ENCODE measurements at regions of chr1 and their contacts with region 1.

Region 1: DNA sequence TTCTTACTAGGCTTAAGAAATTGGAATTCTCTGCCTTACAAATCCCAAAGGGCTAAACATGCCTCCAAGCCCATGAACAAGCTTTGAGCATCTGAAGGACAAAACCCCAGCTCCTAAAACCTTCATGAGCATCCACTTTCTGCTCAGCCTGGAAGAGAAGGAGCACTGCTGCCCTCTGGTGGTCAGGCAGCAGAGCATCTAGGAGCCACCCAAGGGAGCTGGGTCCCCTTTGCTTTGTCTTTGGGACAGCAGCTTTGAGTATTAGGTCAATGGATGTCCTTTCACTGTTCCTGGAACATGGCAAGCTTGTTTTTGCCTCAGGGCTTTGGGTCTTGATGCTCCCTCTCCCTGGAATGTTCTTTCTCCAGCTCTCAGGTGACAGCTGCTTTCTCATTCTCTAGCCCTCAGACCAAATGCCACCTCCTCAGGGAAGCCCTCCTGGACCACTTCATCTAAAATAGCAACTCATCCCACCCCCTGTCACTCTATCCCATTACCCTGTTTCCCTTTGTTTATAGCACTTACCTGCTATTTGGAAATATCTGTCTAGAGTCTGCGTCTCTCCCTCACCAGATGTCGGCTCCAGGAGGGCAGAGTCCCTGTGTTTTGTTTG is 25.7 kb downstream of the RAB7B start:
- DNase-seq: peak; percentile 68
- H3K4me3 ChIP-seq: no peak overlapping the region
- H3K27ac ChIP-seq: no peak overlapping the region
- H3K4me1 ChIP-seq: peaks cover 5% of the 10 kb centered on the region
- H3K27me3 ChIP-seq: no peaks in the 10 kb centered on the region
- CTCF ChIP-seq: peak; percentile 91 to 98
- POLR2A ChIP-seq: no peak

Region 2: DNA sequence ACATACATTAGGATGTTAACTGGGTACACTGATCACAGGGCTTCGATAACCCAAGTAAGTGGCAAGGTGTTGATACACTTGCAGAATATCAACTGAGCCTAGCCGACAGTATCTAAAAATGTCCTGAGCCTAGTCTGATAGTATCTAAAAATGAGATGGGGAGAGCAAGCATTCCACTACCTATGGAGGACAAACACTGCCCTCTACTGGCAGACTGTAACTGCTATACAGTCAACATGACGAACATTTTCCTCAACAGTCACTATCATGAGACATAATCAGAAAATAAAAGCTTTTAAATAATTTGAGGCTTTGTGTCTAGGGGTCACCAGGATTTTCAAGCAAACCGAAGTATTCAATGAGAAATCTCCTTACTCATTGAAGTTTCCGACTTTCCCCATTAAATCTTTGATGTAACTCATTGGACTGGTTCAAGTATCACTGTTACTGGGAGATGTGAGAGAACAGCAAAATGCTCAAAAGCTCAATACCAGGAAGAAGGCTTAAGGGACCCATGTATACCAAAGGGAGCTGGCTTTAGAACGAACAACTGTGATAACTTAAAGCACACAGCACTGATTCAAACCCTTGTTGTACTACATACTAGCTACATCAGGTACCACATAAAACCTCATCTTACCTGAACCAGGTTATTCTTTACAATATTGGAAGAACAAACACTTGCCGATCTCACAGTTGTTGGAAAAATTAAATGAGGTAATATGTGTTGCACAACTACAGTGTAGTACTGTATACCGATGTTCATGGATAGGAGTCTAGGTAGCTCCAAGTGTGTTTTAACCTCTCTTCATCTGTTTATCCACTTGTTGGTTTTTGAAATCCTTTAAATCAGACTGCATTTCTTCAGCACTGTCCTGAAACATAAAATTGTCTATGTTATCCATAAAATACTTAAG is 266.1 kb before region 1 on chr1:
- CTCF ChIA-PET with region 1: interaction called, 31 read pairs
- POLR2A ChIA-PET with region 1: no interaction called
- dilution Hi-C with region 1: no loop called
- intact Hi-C with region 1: no loop called
- DNase-seq: peak; percentile 88
- H3K4me3 ChIP-seq: no peak overlapping the region
- H3K27ac ChIP-seq: peak overlapping the region; percentile 44
- H3K4me1 ChIP-seq: peaks cover 12% of the 10 kb centered on the region
- H3K27me3 ChIP-seq: no peaks in the 10 kb centered on the region
- CTCF ChIP-seq: peak; percentile 67 to 70
- POLR2A ChIP-seq: no peak

Region 3: DNA sequence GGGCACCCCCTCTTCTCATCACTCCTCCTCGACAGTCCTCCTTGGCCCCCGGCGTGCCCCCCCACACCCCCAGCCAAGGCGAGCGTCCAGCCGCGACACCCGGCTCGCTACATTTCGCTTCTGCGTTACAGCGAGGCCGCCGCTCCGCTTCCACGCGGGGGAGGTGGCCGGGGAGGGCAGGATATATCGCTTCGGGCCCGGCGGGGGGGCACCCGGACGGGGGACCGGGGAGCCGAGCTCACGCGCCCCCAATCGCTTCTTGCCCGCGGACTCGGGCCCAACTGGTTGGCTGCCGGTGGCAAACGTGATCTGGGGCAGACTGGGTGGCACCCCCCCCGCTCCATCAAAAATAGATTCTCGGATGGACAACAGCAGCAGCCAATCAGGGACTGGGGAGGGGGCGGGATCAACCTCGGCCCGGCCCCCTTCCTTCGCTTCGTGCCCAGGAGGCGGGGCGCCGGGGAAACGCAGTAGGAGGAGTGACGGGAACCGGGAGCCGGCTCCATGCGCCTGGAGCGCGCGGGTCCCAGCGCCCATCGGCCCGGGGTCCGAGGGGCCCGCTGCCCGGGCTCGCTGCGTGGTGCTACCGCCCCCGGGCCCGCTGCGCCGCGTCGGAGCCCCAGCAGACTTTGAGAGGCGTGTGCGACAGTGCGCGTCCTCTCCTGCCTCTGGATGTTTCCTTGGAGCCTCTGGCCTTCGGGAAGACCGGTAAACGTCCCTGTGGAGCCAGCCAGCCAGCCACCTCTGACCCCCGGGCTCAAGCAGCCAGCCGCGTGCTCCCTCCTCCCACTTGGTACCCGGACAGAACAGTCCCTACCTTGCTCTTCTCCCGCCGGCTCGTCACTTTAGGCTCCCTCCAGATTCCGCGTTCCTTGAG is 164.4 kb before region 1 on chr1 and contains the start of gene SLC41A1:
- CTCF ChIA-PET with region 1: interaction called, 33 read pairs
- POLR2A ChIA-PET with region 1: no interaction called
- dilution Hi-C with region 1: no loop called
- intact Hi-C with region 1: no loop called
- DNase-seq: peak; percentile 96
- H3K4me3 ChIP-seq: peak within 1 kb of the TSS; percentile 49 to 78 (median 76)
- H3K27ac ChIP-seq: peak within 1 kb of the TSS; percentile 45
- H3K4me1 ChIP-seq: peaks cover 10% of the 10 kb centered on the region
- H3K27me3 ChIP-seq: no peaks in the 10 kb centered on the region
- CTCF ChIP-seq: no peak
- POLR2A ChIP-seq: peak; percentile 41
- total RNA-seq, gene SLC41A1: 21.7 and 23.6 TPM in 2 replicates

Region 4: GRCh38 chr1:205939690-205940330 is 37.7 kb before region 1 on chr1:
- CTCF ChIA-PET with region 1: interaction called, 1,606 read pairs
- POLR2A ChIA-PET with region 1: no interaction called
- dilution Hi-C with region 1: no loop called
- intact Hi-C with region 1: no loop called
- DNase-seq: no peak
- H3K4me3 ChIP-seq: no peak overlapping the region
- H3K27ac ChIP-seq: no peak overlapping the region
- H3K4me1 ChIP-seq: peaks cover 14% of the 10 kb centered on the region
- H3K27me3 ChIP-seq: peaks cover 5 to 10% of the 10 kb centered on the region in 2 experiments
- CTCF ChIP-seq: peak in 1 of 2 donors; percentile 35
- POLR2A ChIP-seq: no peak

Region 5: GRCh38 chr1:205998457-205999241 is 21.1 kb after region 1 on chr1:
- CTCF ChIA-PET with region 1: interaction called, 11 read pairs
- POLR2A ChIA-PET with region 1: no interaction called
- dilution Hi-C with region 1: no loop called
- intact Hi-C with region 1: no loop called
- DNase-seq: no peak
- H3K4me3 ChIP-seq: no peak overlapping the region
- H3K27ac ChIP-seq: no peak overlapping the region
- H3K4me1 ChIP-seq: peaks cover 2% of the 10 kb centered on the region
- H3K27me3 ChIP-seq: no peaks in the 10 kb centered on the region
- CTCF ChIP-seq: no peak
- POLR2A ChIP-seq: no peak

Region 6: DNA sequence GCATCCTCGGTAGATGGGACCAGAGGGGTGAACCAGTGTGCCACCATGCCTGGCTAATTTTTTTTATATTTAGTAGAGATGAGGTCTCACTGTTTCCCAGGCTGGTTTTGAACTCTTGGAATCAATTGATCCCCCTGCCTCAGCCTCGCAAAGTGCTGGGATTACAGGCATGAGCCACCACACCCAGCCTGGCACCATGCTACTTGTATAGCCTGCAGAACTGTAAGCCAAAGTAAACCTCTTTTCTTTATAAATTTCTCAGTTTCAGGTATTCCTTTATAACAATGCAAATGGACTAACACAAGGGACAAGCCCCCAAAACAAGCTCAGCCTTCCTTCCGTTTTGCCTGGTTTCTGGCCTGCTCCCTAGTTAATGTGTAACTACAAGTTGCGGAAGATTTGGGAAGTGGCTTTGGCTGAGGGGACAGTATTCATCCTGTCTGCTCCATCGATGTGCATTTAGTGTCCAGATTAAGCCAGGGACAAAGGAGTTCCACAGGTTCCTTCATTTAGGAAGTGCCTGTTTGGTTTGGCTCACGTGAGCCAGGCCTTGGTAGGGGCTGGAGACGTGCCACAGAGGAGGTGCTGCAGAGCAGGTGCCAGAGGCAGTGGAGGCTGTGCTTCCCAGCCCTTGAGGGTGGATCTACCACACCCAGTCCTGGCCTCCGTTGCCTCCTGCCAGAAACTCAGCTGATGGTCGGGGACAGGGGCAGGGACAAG is 135.3 kb after region 1 on chr1:
- CTCF ChIA-PET with region 1: interaction called, 319 read pairs
- POLR2A ChIA-PET with region 1: no interaction called
- dilution Hi-C with region 1: loop called (anchors 25 kb)
- intact Hi-C with region 1: no loop called
- DNase-seq: no peak
- H3K4me3 ChIP-seq: no peak overlapping the region
- H3K27ac ChIP-seq: no peak overlapping the region
- H3K4me1 ChIP-seq: peaks cover 4% of the 10 kb centered on the region
- H3K27me3 ChIP-seq: peaks cover 9 to 10% of the 10 kb centered on the region in 2 experiments
- CTCF ChIP-seq: no peak
- POLR2A ChIP-seq: no peak

Measured in endothelial cell of umbilical vein (primary cell).